ENCODE measurements at regions of chr9 and their contacts with region 1.

Region 1: DNA sequence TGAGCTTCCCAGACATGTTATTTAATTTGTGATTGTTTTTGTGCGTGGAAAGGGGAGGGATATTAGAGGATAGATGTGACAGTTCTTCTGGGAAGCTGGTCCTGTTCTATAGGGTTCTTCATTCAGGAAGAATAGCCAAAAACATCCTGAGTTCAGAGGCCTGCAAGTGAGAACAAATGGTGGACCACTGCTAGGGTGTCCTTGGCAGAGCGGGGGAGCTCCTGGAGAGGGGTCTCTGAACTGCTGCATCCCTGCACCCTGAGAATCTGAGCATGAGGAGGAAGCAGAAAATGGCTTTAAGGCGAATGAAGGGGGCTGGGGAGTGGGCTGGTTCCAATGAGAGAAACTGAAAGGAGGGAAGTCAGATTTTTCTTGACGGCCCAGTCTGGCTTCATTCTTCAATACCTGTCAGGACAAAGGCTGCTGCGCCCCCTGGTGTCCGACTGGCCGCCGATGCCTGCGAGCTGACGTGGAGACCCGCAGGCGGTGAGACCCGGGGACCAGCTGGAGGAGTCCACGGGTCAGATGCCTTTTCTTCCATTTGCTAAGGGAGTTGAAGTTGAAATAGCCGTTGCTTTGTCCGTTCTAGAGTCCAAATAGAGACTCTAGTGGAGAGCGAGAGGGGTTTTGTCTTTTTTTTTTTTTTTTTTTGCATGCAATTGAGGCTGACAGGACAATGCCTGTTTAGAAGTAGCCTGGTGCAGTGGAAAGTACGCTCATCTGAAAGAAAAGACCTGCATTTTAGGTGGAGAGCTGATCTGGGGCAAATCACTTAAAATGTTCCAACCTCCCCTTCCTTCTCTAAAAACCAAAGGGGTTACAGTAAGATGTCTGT is 39.5 kb upstream of the NFIB start:
- DNase-seq: peak; percentile 95

Region 2: DNA sequence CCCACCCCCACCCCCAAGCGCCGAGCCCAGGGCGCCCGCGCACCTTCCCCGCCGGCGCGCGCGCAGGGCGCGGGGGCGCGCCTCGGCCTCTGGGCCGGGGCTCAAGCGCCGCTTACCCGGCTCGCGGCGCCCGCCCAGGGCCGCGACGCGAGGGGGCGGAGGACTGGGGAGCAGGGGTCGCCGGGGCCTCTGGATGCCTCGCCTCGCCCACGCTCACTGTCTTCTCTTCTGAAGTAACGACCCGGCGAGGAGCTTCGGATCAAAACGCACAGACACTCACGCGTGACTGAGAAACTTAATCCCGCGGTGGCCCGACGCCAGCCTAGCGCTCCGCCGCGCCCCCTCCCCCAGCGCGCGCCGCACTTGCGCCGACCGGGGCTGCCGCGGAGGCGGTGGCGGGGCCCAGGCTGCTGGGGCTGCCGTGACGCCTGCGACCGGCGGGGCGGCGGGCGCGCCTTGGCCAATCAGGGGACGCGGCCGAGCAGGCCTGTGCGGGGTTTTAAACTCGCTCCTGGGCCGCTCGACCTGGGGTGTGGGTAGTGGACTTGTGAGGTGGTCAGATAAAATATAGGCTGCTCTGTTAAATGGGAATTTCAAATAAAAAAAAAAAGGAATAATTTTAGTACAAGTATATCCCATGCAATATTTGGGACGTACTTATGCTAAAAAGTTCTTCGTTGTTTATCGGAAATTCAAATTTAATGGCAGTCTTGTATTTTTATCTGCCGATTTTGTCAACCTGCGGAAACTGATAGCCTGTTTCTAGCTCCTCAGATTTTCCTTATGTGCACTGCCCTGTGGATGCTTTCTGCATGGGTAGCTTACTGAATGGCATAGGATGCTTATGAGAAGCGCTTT is 1073.9 kb before region 1 on chr9 and contains the start of gene MPDZ:
- intact Hi-C with region 1: loop called (anchors 10 kb)
- DNase-seq: peak; percentile 82
- total RNA-seq, gene MPDZ: 97.3 TPM

Region 3: DNA sequence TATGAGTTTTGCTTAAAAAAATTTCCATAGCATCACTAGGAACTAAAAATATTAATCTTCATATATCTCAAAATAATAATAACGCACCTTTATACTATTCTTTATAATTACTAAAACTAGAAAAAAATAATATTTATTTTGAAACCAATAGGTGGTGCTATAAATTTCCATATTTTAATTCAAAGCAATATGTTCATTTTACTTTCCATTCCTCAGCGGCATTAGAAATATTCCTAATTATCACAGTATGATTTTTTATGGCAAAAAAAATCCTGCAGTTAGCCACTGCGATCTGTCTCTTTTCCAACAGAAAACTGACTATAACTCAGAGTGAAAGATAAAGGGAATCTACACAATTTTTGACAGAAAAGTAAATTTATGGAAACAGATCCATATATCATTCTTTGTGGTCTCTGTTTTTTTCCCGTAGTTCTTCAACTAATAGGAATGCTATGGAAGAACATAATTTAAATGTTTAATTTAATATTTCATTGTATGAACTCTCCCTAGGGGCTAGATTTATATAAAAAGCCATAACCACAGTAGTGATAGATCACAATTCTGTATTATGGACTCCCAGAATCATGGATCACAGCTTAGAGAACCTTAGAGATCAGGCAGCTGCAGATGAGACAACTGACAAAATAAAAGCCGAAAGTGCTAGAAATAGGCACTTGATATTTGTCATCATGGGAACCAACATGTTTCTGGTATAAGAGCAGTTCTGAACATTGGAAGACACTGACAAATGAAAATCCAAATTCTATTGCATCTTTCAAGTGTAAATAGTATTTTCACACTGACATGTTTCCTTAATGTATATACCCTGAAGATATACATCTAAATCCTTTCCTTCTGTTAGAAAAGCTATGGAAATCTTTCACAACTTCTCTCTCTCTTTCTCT is 906.2 kb before region 1 on chr9:
- intact Hi-C with region 1: loop called (anchors 5 kb)
- DNase-seq: no peak

Region 4: DNA sequence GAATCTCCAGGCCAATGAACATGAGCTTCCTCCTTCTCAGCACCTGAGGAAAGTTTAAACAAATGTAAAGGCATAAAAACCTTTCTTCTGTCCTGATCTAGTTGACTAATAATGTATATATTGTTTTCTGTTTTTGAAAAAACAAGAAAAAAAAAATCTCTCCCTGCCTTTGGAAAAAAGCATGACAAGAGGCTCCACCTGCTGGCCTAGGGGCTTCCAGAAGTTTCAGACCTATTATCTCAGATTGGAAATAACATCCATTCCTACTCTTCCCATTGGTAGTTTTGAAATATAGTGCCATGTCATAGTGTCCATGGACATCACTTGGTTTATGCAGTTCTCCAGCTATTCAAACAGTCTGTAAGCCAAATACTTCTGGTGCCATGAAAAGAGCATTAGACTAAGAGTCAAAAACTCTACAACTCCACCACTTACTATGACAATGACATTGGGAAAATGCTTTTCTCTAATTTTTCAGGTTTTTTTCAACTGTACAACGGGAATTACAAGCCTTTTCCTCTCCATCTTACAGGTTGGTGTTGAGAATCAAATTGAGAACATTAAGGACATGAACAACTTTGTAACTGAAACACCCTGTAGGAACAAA is 664.3 kb before region 1 on chr9:
- intact Hi-C with region 1: loop called (anchors 10 kb)
- DNase-seq: no peak

Region 5: DNA sequence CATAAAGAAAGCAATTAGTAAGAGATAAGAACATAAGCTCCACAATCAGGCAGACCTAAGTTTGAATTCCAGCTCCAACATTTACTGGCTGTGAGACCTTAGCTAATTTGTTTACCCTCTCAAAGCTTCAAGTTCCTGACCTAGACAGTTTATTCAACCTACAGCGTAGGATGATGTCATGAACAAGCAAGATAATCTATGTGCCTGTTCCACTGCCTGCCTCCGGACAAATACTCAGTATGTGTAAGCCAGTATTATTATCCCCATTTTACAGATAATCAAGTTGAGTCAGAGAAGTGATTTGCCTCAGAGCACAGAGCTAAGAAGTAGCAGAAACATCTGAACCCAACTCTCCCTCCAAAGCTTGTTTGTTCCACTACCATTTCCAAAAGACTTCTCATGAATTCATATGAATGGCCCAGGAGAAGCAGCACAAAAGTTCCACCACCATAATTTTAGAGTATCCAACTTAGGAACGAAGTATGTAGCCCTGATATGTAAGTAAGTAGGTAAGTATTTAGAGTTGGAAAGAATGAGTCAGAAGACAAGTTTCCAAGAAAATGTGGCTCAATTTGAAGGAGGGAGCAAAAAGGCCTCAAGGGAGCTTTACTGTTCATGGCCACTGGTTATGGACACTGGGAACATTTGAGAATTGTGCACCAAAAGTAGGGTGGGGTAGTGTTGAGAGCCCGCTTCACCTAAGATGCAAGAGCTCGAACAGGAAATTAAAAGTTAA is 437.7 kb before region 1 on chr9:
- intact Hi-C with region 1: loop called (anchors 10 kb)
- DNase-seq: no peak

Region 6: GRCh38 chr9:14238552-14238951 is 114.9 kb before region 1 on chr9:
- intact Hi-C with region 1: loop called (anchors 5 kb)
- DNase-seq: no peak

Region 7: GRCh38 chr9:14296495-14297113 is 56.8 kb before region 1 on chr9:
- intact Hi-C with region 1: no loop called
- DNase-seq: no peak

Region 8: GRCh38 chr9:14428781-14429230 is 75.4 kb after region 1 on chr9:
- intact Hi-C with region 1: loop called (anchors 5 kb)
- DNase-seq: no peak

Measured in cardiac septum (tissue), 1 donor.